T-cell (primary cell): ENCODE measurements at regions of chr1 and their contacts with region 1.

Region 1: GRCh38 chr1:46718727-46719622 is at the start of gene EFCAB14:
- DNase-seq: peak; percentile 96 to 100 (median 99)
- ATAC-seq: peak; percentile 98 to 99 (median 99)
- H3K4me3 ChIP-seq: peak within 1 kb of the TSS; percentile 67 to 74
- H3K4me3 Mint-ChIP-seq: peak within 1 kb of the TSS; percentile 88 to 92 (median 88)
- H3K27ac ChIP-seq: peak within 1 kb of the TSS; percentile 61
- H3K27ac Mint-ChIP-seq: peak within 1 kb of the TSS; percentile 90 to 96
- H3K4me1 ChIP-seq: peaks cover 22 to 27% of the 10 kb centered on the region in 2 experiments
- H3K4me1 Mint-ChIP-seq: peaks cover 33 to 48% (median 44%) of the 10 kb centered on the region in 3 donors
- H3K27me3 ChIP-seq: no peaks in the 10 kb centered on the region
- H3K27me3 Mint-ChIP-seq: no peaks in the 10 kb centered on the region
- total RNA-seq, gene EFCAB14: 78.0 to 90.2 (median 82.5) TPM

Region 2: DNA sequence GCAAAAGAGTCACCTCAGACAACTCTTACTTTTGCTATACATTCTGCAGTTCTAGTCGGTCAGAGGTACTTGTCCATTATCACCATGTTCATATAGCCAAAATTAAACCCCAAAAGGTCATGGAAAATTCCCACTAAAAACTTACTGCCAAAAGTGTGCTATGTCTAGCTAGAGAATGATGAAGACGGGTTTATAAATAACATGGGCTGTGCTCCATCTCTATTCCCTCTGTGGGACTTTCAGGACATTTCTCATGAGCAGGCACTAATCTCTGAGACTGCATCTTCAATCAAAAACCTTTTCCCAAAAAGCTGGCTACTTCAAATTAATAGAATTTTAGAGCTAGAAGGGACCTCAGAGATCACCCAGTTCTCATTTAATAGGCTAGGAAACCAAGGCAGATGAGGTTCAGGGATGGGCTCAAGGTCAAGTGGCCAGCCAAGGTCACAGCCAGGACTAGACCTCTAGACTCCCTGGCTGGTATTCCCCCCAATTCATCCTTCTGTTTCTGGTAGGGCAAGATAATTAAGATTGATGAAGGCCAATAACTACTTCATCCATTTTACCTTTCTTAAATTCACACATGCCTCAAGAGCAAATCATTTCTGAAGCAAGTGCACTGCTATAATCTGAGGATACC is 81.4 kb before region 1 on chr1:
- CTCF ChIA-PET with region 1: no interaction called
- POLR2A ChIA-PET with region 1: interaction called in 1 of 2 experiments, 11 read pairs
- DNase-seq: no peak
- ATAC-seq: no peak
- H3K4me3 ChIP-seq: no peak overlapping the region
- H3K4me3 Mint-ChIP-seq: no peak overlapping the region
- H3K27ac ChIP-seq: no peak overlapping the region
- H3K27ac Mint-ChIP-seq: no peak overlapping the region
- H3K4me1 ChIP-seq: no peaks in the 10 kb centered on the region
- H3K4me1 Mint-ChIP-seq: no peaks in the 10 kb centered on the region
- H3K27me3 ChIP-seq: no peaks in the 10 kb centered on the region
- H3K27me3 Mint-ChIP-seq: no peaks in the 10 kb centered on the region